GM18951 (cell line): ENCODE measurements at regions of chr7 and their contacts with region 1.

Region 1: GRCh38 chr7:76314042-76314721 is 11.7 kb downstream of the HSPB1 start:
- POLR2A ChIP-seq: no peak

Region 2: DNA sequence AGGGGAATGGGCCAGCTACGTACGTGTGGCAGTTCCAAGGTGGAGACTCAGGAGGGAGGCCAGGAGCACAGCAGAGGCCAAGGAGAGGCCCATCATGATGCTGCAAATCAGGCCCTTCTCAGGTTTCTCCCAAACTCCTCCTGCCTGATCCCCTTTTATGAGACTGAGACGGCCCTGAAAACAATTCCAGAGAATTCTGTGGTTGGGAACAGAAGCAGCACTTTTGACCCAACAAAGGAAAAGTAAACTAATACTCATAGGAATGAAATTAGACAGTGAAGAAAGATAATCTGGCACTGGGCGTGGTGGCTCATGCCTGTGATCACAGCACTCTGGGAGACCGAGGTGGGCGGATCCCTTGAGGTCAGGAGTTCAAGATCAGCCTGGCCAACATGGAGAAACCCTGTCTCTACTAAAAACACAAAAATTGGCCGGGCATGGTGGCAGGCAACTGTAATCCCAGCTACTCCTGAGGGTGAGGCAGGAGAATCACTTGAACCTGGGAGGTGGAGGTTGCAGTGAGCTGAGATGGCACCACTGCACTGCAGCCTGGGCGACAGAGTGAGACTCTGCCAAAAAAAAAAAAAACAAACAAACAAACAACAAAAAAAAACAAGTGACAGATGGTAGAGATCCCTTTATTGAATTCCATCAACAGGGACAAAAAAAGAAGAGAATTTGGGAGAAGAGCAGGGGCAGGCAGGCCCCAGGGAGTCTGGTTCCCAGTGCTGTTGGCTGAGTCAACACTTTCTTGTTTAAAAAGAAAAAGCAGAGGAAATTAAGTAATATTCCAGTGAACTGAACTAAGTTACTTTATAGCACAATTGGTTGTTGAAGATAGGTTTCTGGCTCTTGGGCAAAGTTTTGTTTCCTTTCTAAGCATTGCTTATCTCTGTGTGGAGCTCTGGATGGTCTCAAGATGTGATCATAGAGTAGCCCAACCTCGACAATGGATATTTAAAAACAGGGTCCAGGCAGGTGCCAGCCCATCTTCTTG is 541.8 kb before region 1 on chr7 and contains the start of gene CCL26:
- in situ Hi-C with region 1: no loop called
- POLR2A ChIP-seq: no peak

Region 3: GRCh38 chr7:76179686-76180085 is 134.5 kb before region 1 on chr7:
- in situ Hi-C with region 1: loop called (anchors 10 kb)
- POLR2A ChIP-seq: no peak